ENCODE measurements at regions of chr10 and their contacts with region 1.

Region 1: GRCh38 chr10:5735119-5735518 is 50.5 kb downstream of the TASOR2 start:
- DNase-seq: no peak
- ATAC-seq: no peak

Region 2: DNA sequence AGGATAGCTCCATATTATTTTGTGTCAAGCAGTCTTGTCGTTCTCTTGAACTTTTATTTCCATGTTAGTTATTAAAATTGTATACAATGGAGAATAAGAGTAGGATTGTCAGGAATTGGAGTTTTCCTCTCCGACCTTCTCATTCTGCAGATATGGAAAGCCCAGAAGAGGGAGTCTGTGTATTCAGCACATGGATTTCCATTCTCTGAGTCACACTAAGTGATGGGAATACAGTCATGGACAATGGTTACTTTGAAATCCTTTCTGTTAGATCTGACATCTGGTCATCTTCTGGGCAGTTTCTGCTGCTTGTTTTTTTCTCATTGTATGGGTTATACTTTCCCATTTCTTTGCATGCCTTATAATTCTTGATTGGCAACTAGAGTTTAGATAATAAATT is 55.5 kb before region 1 on chr10:
- intact Hi-C with region 1: loop called in 1 of 2 experiments (anchors 2 kb)
- DNase-seq: no peak
- ATAC-seq: no peak